Astrocyte of the cerebellum (primary cell): ENCODE measurements at regions of chr2 and their contacts with region 1.

Region 1: DNA sequence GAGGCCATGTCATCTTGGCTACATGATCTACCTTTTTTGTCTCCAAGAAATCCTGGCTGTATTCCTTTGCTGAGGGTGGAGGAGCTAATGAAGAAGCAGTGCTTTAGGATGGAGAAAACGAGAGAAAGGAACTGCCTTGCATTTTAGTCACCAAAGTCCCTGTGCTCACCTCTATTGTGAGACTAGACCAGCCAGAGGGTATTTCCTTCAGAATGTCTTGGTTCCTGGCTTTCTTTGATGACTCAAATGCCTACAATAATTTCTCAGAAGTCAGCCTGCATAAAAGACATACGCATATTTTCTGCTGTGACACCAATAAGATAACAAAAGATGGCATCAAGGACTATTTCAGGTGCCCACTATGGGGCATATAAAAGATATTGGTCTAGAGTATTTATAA is 10.8 kb downstream of the SF3B6 start:
- DNase-seq: no peak
- H3K4me3 ChIP-seq: no peak overlapping the region
- CTCF ChIP-seq: no peak

Region 2: DNA sequence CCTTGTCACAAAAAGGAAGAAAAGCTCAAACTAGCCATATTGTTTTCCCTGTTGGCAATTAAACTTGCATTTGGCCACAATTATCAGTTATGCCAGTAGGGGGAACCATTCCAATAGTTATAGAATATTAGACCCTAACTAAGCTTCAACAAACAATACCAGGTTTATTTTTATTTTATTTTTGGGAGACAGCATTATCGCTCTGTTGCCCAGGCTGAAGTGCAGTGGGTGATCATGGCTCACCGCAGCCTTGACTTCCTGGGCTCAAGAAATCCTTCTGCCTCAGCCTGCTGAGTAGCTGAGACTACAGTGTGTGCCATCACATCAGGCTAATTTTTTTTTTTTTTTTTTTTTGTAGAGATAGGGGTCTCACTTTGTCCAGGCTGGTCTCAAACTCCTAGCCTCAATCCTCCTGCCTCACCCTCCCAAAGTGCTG is 240.5 kb before region 1 on chr2:
- in situ Hi-C with region 1: loop called (anchors 5 kb)
- DNase-seq: peak; percentile 46
- H3K4me3 ChIP-seq: no peak overlapping the region
- CTCF ChIP-seq: peak; percentile 58